Activated CD4-positive, alpha-beta T cell treated with anti-CD3 and anti-CD28 coated beads for 36 hours (primary cell): ENCODE measurements at regions of chr12 and their contacts with region 1.

Region 1: GRCh38 chr12:10320643-10321042 is 13.0 kb downstream of the KLRD1 start:
- DNase-seq: no peak
- ATAC-seq: peak; percentile 91
- H3K4me3 Mint-ChIP-seq: no peak overlapping the region
- H3K27ac Mint-ChIP-seq: peak overlapping the region; percentile 32
- H3K4me1 Mint-ChIP-seq: peaks cover 30% of the 10 kb centered on the region
- H3K27me3 Mint-ChIP-seq: peaks cover 10% of the 10 kb centered on the region

Region 2: GRCh38 chr12:10364815-10365622 is 44.4 kb after region 1 on chr12:
- CTCF ChIA-PET with region 1: interaction called, 3 read pairs
- POLR2A ChIA-PET with region 1: interaction called, 4 read pairs
- intact Hi-C with region 1: loop called in 1 of 2 experiments (anchors 2 kb)
- DNase-seq: peak; percentile 76
- ATAC-seq: peak; percentile 84
- H3K4me3 Mint-ChIP-seq: no peak overlapping the region
- H3K27ac Mint-ChIP-seq: no peak overlapping the region
- H3K4me1 Mint-ChIP-seq: peaks cover 3% of the 10 kb centered on the region
- H3K27me3 Mint-ChIP-seq: no peaks in the 10 kb centered on the region